ENCODE measurements at regions of chr2 and their contacts with region 1.

Region 1: DNA sequence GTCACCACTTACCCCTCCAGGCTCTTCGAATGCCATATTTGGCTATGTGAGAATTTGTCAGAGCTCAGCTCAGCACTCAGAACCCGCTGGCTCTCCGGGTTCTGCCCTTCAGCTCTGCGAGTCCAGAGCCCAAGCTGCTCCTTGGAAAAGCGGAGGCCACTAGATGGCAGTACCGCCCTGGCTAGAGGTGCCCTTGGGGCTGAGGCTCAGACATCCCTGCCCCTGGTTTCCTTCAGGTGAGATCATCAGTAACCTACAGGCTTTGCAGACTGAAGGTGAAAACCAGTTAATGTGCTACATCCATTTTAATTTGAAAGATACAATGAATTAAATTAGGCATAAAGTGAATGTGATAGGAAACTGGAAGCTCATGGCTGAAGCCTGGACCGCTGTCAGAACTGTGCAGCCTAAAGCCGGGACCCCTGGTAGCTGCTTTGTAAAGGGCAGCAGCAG is 285.6 kb downstream of the AGAP1 start:
- DNase-seq: peak; percentile 75
- H3K4me3 Mint-ChIP-seq: no peak overlapping the region
- H3K27ac Mint-ChIP-seq: no peak overlapping the region
- H3K4me1 Mint-ChIP-seq: no peaks in the 10 kb centered on the region
- H3K27me3 Mint-ChIP-seq: no peaks in the 10 kb centered on the region
- CTCF ChIP-seq: peak; percentile 89

Region 2: DNA sequence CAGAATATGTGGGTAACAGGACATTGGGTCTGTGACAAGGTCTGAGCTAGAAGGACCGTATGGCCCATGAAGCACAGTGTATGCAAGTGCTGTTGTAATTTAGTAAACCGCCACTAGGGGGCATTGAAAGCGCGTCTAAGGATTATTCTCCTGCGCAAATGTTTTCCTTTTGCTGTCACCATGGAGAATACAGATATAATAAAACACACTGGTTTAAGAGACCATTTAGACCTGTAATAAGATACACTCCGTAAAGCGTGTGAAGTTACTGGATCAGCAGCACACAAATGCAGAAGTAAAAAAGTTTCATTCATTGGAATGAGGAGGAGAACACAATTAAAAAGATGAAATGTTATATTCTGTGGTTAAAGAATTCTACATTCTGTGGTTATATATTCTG is 13.2 kb before region 1 on chr2:
- CTCF ChIA-PET with region 1: interaction called, 26 read pairs
- POLR2A ChIA-PET with region 1: interaction called, 3 read pairs
- intact Hi-C with region 1: no loop called
- DNase-seq: peak; percentile 81
- H3K4me3 Mint-ChIP-seq: no peak overlapping the region
- H3K27ac Mint-ChIP-seq: peak overlapping the region; percentile 88
- H3K4me1 Mint-ChIP-seq: peaks cover 14% of the 10 kb centered on the region
- H3K27me3 Mint-ChIP-seq: no peaks in the 10 kb centered on the region
- CTCF ChIP-seq: peak; percentile 90

Region 3: DNA sequence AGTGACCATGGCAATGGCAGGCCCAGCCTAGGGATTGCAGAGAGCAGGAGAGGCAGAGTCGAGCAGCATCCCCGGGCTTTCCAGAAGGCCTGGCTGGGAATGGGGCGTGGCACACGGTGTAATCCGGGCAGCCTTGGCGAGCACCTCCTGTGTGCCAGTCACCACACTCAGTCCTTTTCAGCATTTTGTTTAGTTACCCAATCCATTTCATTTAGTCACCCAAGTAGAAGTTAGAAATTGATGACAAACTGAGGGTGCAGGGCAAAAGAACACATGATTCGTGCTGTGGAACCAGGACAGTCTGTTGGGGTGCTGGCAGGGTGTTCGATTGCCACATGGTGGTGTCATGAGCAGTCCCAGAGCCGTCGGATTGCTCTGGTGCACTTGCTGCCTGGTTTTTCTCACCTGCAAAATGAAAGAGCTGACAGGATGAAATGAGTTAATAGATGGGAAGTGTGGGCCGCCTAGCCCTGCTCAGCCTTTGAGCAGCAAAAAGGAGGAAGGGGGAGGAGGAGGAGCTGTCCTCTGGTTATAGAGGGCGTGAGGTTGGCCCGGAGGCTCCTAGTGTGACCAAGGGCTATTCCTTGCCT is 13.8 kb after region 1 on chr2:
- CTCF ChIA-PET with region 1: interaction called, 22 read pairs
- POLR2A ChIA-PET with region 1: interaction called, 3 read pairs
- intact Hi-C with region 1: no loop called
- DNase-seq: peak; percentile 45
- H3K4me3 Mint-ChIP-seq: no peak overlapping the region
- H3K27ac Mint-ChIP-seq: no peak overlapping the region
- H3K4me1 Mint-ChIP-seq: peaks cover 12% of the 10 kb centered on the region
- H3K27me3 Mint-ChIP-seq: no peaks in the 10 kb centered on the region
- CTCF ChIP-seq: peak; percentile 20

Region 4: GRCh38 chr2:236180831-236181453 is 401.5 kb after region 1 on chr2:
- CTCF ChIA-PET with region 1: interaction called, 52 read pairs
- POLR2A ChIA-PET with region 1: interaction called, 3 read pairs
- intact Hi-C with region 1: loop called (anchors 1 kb)
- DNase-seq: peak; percentile 75
- H3K4me3 Mint-ChIP-seq: no peak overlapping the region
- H3K27ac Mint-ChIP-seq: no peak overlapping the region
- H3K4me1 Mint-ChIP-seq: peaks cover 13% of the 10 kb centered on the region
- H3K27me3 Mint-ChIP-seq: no peaks in the 10 kb centered on the region
- CTCF ChIP-seq: peak; percentile 57

Region 5: GRCh38 chr2:237060534-237061312 is 1281.3 kb after region 1 on chr2:
- CTCF ChIA-PET with region 1: interaction called, 3 read pairs
- POLR2A ChIA-PET with region 1: no interaction called
- intact Hi-C with region 1: loop called (anchors 5 kb)
- DNase-seq: peak; percentile 71
- H3K4me3 Mint-ChIP-seq: no peak overlapping the region
- H3K27ac Mint-ChIP-seq: no peak overlapping the region
- H3K4me1 Mint-ChIP-seq: peaks cover 11% of the 10 kb centered on the region
- H3K27me3 Mint-ChIP-seq: no peaks in the 10 kb centered on the region
- CTCF ChIP-seq: peak; percentile 75